ENCODE measurements at regions of chr5 and their contacts with region 1.

Region 1: GRCh38 chr5:32403760-32404159 is 40.8 kb downstream of the ZFR start:
- DNase-seq: no peak
- H3K4me3 ChIP-seq: no peak overlapping the region
- H3K27ac ChIP-seq: no peak overlapping the region
- H3K4me1 ChIP-seq: no peaks in the 10 kb centered on the region
- H3K27me3 ChIP-seq: no peaks in the 10 kb centered on the region
- CTCF ChIP-seq: no peak

Region 2: DNA sequence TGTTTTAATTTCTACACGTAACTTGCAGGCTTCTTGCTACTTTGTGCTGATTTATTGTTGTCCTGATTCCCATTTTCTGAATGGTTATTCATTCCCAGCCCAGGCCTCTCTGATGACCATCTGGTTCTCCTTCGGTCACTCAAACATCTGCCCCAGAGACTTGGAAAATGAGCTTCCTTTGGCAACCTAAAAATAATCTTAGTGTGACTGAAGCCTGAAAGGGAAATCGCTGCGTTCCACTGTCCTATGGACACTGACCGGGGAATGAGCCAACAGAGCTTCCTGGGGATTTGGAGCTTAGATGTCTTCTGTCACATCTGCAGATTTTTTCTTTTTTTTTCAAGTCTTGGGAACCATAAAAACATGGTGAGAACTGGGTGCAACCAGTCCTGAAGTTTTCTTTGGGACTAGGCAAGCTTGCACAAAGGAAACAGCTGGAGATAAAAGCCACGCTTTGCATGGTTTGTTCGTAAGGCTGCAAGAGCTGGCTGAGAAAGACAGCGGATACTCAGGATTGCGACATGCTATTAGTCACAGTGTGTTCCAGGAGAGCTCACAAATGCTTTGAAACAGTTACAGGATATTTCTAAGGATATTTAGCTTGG is 375.9 kb before region 1 on chr5:
- CTCF ChIA-PET with region 1: no interaction called
- POLR2A ChIA-PET with region 1: no interaction called
- intact Hi-C with region 1: no loop called
- DNase-seq: peak; percentile 14 to 60
- H3K4me3 ChIP-seq: no peak overlapping the region
- H3K27ac ChIP-seq: no peak overlapping the region
- H3K4me1 ChIP-seq: no peaks in the 10 kb centered on the region
- H3K27me3 ChIP-seq: peaks cover 88% of the 10 kb centered on the region
- CTCF ChIP-seq: no peak

Region 3: GRCh38 chr5:32390819-32391591 is 12.8 kb before region 1 on chr5:
- CTCF ChIA-PET with region 1: no interaction called
- POLR2A ChIA-PET with region 1: no interaction called
- intact Hi-C with region 1: loop called (anchors 2 kb)
- DNase-seq: peak; percentile 47 to 66
- H3K4me3 ChIP-seq: no peak overlapping the region
- H3K27ac ChIP-seq: peak overlapping the region; percentile 49
- H3K4me1 ChIP-seq: no peaks in the 10 kb centered on the region
- H3K27me3 ChIP-seq: no peaks in the 10 kb centered on the region
- CTCF ChIP-seq: no peak

Measured in PC-9 (cell line).